ENCODE measurements at regions of chr15 and their contacts with region 1.

Region 1: DNA sequence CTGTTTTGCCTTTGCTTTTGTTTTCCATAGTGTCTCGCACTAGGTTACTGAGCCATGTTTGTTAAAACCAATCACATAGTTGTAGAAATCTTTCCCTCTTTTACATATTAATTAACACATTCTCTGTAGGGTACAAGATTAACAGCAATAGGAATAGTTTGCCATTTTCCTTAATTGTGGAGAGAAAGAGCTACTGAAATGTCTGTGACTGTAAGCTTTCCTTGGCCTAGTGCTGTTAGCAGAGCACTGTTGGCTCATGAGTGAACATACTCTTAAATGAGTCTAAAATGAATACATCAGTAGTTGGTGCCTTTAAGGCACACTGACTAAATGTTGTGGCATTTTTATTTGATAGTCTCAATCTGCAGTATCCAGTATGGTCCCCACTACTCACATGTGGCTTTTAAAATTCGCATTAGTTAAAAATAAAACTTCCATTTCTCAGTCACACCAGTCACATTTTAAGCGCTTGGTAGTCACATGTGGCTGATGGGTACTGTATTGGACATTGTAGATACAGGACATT is 28.2 kb downstream of the CHD2 start:
- DNase-seq: no peak
- ATAC-seq: no peak
- H3K4me3 ChIP-seq: no peak overlapping the region
- H3K27ac ChIP-seq: peak overlapping the region; percentile 35
- H3K4me1 ChIP-seq: peaks cover 27% of the 10 kb centered on the region
- H3K27me3 ChIP-seq: no peaks in the 10 kb centered on the region
- CTCF ChIP-seq: no peak

Region 2: GRCh38 chr15:92772626-92773244 is 155.6 kb before region 1 on chr15:
- CTCF ChIA-PET with region 1: interaction called, 11 read pairs
- POLR2A ChIA-PET with region 1: no interaction called
- in situ Hi-C with region 1: no loop called
- intact Hi-C with region 1: no loop called
- DNase-seq: no peak
- ATAC-seq: no peak
- H3K4me3 ChIP-seq: no peak overlapping the region
- H3K27ac ChIP-seq: no peak overlapping the region
- H3K4me1 ChIP-seq: no peaks in the 10 kb centered on the region
- H3K27me3 ChIP-seq: no peaks in the 10 kb centered on the region
- CTCF ChIP-seq: no peak

Region 3: DNA sequence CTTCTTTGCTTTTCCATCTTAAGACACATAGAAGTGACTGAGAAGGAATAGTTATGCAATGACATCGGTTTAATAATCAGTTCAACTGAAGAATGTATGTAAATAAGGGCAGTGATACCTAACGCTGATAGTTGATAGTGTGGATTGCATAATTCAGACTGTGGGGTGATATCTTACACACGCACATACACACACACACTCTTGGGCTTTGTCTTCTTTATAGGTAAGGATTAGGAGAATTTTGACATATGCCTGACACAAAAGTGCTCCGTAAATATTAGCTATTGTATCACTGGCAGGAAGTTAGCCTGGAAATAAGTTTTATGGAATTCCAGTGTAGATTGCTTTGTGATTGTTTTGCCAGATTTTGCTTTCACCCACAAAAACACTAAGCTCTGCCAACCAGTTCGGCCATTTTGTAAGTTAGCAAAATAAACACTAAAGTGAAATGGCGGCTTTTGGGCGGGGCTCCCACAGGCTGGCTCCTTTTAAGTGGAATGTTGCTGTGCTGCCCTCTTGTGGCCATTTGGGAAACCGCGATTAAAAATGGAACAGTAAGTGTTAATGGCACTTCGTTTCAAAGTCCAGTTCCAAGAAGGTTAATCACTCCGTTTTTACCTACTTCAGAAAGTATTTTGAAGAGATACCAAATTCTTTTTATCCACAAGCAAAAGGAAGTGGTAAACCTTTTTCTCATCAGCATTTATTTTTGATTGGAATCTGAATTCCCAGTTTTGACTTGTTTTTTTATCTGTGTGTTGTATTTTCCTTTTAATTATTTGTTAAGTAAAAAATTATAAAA is 10.5 kb before region 1 on chr15:
- CTCF ChIA-PET with region 1: interaction called, 16 read pairs
- POLR2A ChIA-PET with region 1: no interaction called
- in situ Hi-C with region 1: no loop called
- intact Hi-C with region 1: no loop called
- DNase-seq: no peak
- ATAC-seq: peak; percentile 70
- H3K4me3 ChIP-seq: peak overlapping the region; percentile 15 to 40; a peak in 3 of 4 replicates
- H3K27ac ChIP-seq: peak overlapping the region; percentile 97
- H3K4me1 ChIP-seq: peaks cover 95% of the 10 kb centered on the region
- H3K27me3 ChIP-seq: no peaks in the 10 kb centered on the region
- CTCF ChIP-seq: peak; percentile 95

Region 4: DNA sequence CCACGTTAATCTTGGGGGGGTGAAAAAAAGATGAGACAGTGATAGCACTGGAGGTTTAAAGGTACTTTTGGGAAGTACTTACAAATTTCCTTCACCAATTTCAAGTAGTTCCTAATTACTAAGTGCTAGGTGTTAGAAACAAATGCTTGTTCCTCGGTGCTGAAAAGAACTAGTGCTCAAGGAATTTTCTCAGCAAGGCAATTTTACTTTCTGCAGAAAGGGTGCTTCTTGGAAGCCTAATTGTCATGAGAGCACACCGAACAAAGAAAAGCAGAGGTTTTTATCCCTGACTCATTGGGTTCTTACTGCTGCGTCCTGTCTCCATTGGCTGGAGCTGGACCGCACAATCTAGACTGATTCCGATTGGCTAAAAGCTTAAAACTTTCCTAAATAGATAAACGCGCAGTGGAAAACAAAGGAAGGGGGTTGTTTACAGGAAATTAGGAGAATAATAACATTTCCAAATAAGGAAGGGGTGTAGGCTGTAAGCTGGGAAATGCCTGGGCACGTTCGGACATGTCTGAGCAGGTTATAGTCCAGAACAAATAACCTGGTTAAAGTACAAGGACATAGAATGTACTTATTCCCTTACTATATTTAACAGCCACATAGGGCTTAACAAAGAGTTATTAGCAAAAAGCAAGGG is 21.4 kb after region 1 on chr15:
- CTCF ChIA-PET with region 1: no interaction called
- POLR2A ChIA-PET with region 1: interaction called, 14 read pairs
- in situ Hi-C with region 1: no loop called
- intact Hi-C with region 1: no loop called
- DNase-seq: no peak
- ATAC-seq: no peak
- H3K4me3 ChIP-seq: no peak overlapping the region
- H3K27ac ChIP-seq: no peak overlapping the region
- H3K4me1 ChIP-seq: no peaks in the 10 kb centered on the region
- H3K27me3 ChIP-seq: no peaks in the 10 kb centered on the region
- CTCF ChIP-seq: no peak

Region 5: GRCh38 chr15:92960996-92961681 is 32.9 kb after region 1 on chr15:
- CTCF ChIA-PET with region 1: no interaction called
- POLR2A ChIA-PET with region 1: no interaction called
- in situ Hi-C with region 1: no loop called
- intact Hi-C with region 1: loop called (anchors 5 kb)
- DNase-seq: no peak
- ATAC-seq: no peak
- H3K4me3 ChIP-seq: no peak overlapping the region
- H3K27ac ChIP-seq: no peak overlapping the region
- H3K4me1 ChIP-seq: no peaks in the 10 kb centered on the region
- H3K27me3 ChIP-seq: no peaks in the 10 kb centered on the region
- CTCF ChIP-seq: no peak